A673 (cell line): ENCODE measurements at regions of chr16 and their contacts with region 1.

Region 1: DNA sequence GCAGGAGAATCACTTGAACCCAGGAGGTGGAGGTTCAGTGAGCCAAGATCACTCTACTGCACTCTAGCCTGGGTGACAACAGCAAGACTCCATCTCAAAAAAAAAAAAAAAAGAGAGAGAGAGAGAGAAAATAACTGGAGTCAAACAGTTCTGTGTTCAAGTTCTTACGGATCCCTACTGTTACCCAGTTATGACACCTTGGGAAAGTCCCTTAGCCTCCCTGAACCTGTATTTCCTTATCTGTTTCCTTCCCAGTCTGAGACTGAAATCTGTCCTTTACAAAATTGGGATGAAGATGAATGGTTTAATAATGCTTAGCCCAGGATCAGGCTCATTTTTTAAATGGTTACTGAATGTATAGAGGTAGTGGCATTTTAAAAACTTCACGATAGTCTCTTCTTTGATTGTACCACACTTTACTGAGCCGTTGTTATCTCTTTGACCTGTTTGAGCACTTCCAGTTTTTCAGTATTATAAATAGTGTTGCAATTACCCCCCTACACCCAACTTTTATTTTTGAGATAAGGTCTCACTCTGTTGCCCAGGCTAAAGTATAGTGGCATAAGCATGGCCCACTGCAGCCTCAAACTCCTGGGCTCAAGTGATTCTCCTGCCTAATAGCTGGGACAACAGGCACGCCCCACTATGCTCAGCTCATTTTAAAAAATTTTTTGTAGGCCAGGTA is 17.1 kb downstream of the ZNF768 start:
- DNase-seq: no peak
- H3K4me3 ChIP-seq: no peak overlapping the region
- H3K27ac ChIP-seq: no peak overlapping the region
- H3K4me1 ChIP-seq: no peaks in the 10 kb centered on the region
- H3K27me3 ChIP-seq: no peaks in the 10 kb centered on the region
- CTCF ChIP-seq: no peak

Region 2: DNA sequence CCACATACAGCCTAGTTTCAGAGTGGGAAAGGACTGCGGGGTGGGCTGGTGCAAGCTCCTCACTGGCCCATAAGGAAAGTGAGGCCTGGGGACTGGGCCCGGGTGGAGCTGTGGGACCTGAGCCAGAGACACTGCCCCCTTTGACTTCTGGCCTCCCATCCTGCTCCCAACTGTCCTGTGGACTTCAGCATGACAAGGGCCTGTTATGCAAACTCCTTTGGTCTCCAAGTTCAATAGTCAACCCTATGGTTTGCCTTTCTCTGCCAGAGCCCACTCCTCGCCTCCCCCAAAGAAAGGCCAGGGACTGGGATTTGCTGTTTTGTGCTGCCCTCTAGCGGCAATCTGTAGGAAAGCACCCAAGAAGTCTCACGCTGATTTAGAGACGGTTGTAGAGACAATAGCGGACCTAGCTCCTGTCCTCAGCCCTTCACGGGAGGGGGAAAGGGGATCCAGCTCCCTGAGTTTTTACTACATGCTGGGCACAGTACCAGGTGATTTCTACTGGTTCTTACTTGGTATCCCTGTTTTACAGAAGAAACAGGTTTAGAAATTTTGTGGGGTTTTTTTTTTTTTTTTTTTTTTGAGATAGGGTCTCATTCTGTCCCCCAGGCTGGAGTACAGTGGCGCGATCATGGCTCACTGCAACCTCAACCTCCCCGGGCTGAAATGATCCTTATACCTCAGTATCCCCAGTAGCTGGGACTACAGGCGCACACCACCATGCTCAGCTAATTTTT is 477.0 kb before region 1 on chr16:
- CTCF ChIA-PET with region 1: no interaction called
- POLR2A ChIA-PET with region 1: no interaction called
- intact Hi-C with region 1: no loop called
- DNase-seq: peak; percentile 85
- H3K4me3 ChIP-seq: no peak overlapping the region
- H3K27ac ChIP-seq: no peak overlapping the region
- H3K4me1 ChIP-seq: no peaks in the 10 kb centered on the region
- H3K27me3 ChIP-seq: no peaks in the 10 kb centered on the region
- CTCF ChIP-seq: peak; percentile 94

Region 3: DNA sequence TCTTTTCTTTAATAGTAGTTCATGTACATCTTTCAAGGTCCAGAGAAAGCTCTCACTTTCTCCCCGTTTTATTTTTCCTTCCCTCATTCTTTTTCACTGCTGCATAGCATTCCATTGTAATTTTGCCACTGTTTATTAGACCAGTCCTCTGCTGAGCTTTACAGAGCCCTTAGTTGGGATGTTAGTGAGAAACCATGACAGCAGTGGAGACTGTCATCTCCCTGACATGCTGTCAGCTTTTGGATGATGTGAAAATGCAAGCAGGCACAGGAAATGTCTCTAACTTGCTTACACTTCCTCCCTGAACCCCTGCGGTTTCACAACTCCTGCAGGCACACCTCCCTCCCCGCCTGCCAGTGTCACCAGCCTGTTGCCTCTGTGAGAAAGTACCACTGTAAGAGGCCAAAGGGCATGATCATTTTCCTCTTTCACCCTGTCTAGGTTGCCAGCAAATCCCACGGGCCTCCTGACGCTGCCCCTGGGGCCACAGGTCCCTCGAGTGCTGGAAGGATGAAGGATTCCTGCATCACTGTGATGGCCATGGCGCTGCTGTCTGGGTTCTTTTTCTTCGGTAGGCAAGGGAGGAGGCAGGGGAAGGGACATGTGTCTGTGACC is 36.8 kb before region 1 on chr16 and contains the start of gene ITGAL:
- CTCF ChIA-PET with region 1: no interaction called
- POLR2A ChIA-PET with region 1: interaction called, 4 read pairs
- intact Hi-C with region 1: loop called (anchors 5 kb)
- DNase-seq: no peak
- H3K4me3 ChIP-seq: no peak within 1 kb of the TSS
- H3K27ac ChIP-seq: no peak within 1 kb of the TSS
- H3K4me1 ChIP-seq: no peaks in the 10 kb centered on the region
- H3K27me3 ChIP-seq: no peaks in the 10 kb centered on the region
- CTCF ChIP-seq: no peak
- total RNA-seq, gene ITGAL: not detected in 2 replicates

Region 4: DNA sequence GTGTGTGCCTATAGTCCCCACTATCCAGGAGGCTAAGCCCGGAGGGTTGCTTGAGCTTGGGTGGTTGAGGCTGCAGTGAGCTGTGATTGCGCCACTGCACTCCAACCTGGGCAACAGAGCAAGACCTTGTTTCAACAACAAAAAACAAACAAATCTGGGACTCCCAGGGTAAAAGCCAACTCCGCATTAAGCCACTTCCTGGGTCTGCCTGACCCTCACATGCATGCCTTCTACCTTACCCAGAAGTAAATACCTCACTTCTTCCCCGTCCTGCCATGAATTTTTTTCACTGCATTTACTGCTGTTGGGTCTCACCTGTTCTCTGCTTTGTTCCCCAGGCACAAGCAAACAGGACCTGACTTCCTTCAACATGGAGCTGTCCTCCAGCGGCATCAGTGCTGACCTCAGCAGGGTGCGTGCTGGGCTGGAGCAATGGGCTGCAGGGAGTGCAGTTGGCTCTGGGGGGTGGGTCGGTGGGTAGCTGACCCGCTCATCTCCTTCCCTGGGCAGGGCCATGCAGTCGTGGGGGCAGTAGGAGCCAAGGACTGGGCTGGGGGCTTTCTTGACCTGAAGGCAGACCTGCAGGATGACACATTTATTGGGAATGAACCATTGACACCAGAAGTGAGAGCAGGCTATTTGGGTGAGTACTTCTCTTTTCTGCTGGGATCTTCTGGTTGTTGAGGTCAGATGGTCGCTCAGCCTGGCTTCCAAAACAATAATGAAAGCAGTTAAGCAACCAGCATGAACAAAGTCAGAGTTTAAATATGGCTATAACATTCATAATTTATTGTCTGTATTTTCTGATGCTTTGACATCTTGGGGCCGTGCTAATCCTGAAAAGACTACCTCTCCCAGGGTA is 20.2 kb before region 1 on chr16:
- CTCF ChIA-PET with region 1: no interaction called
- POLR2A ChIA-PET with region 1: no interaction called
- intact Hi-C with region 1: no loop called
- DNase-seq: no peak
- H3K4me3 ChIP-seq: no peak overlapping the region
- H3K27ac ChIP-seq: no peak overlapping the region
- H3K4me1 ChIP-seq: no peaks in the 10 kb centered on the region
- H3K27me3 ChIP-seq: no peaks in the 10 kb centered on the region
- CTCF ChIP-seq: no peak

Region 5: GRCh38 chr16:30548416-30549253 is 39.4 kb after region 1 on chr16:
- CTCF ChIA-PET with region 1: no interaction called
- POLR2A ChIA-PET with region 1: interaction called, 17 read pairs
- intact Hi-C with region 1: no loop called
- DNase-seq: no peak
- H3K4me3 ChIP-seq: no peak overlapping the region
- H3K27ac ChIP-seq: no peak overlapping the region
- H3K4me1 ChIP-seq: no peaks in the 10 kb centered on the region
- H3K27me3 ChIP-seq: no peaks in the 10 kb centered on the region
- CTCF ChIP-seq: no peak